CD4-positive, alpha-beta memory T cell (primary cell): ENCODE measurements at regions of chr9 and their contacts with region 1.

Region 1: DNA sequence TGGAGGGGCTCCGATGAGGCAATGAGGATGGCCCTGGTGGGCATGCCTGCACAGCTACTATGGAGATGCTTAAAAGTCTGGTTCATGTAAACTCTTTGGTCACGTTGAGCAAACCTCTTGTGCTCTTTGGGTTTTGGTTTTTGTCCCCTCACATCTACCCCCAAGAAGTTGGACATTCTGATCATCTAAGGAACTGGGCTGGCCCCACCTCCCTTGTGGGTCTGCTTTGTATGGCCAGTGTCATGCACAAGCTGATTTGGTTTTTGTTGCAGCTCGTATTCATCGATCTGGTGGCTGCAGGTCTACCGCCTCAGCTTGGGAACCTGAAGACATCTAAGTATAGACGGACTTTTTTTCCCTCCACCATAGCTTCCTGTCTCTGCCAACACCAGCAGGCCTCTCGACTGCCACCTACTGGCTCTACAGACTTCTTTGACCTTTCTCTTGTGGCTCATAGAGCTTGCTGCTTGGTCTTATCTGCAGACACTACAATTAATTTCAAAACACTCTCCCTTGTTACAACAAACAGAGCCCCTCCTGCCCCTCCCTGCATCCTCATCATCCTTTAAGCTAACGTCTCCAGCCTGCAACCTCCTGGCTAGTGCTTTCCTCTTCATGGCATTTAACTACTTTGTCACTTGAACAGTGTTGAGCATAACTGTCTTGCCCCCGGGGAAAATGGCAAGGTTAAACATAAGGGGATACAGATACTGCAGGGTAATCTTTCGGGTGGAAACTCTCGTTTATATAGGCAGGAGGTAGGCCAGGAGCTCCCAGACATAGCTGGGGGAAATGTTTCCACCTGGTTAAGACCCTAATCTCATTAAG is 34.5 kb downstream of the TSTD2 start:
- DNase-seq: peak; percentile 65 to 71 (median 68)
- H3K4me3 ChIP-seq: no peak overlapping the region
- H3K4me3 Mint-ChIP-seq: peak overlapping the region in 5 of 8 donors; percentile 49 to 73 (median 54)
- H3K27ac ChIP-seq: no peak overlapping the region
- H3K27ac Mint-ChIP-seq: peak overlapping the region in 2 of 7 donors; percentile 33 to 79
- H3K4me1 ChIP-seq: no peaks in the 10 kb centered on the region
- H3K4me1 Mint-ChIP-seq: peaks cover 7 to 9% (median 7%) of the 10 kb centered on the region in 4 donors
- H3K27me3 ChIP-seq: no peaks in the 10 kb centered on the region
- H3K27me3 Mint-ChIP-seq: no peaks in the 10 kb centered on the region

Region 2: DNA sequence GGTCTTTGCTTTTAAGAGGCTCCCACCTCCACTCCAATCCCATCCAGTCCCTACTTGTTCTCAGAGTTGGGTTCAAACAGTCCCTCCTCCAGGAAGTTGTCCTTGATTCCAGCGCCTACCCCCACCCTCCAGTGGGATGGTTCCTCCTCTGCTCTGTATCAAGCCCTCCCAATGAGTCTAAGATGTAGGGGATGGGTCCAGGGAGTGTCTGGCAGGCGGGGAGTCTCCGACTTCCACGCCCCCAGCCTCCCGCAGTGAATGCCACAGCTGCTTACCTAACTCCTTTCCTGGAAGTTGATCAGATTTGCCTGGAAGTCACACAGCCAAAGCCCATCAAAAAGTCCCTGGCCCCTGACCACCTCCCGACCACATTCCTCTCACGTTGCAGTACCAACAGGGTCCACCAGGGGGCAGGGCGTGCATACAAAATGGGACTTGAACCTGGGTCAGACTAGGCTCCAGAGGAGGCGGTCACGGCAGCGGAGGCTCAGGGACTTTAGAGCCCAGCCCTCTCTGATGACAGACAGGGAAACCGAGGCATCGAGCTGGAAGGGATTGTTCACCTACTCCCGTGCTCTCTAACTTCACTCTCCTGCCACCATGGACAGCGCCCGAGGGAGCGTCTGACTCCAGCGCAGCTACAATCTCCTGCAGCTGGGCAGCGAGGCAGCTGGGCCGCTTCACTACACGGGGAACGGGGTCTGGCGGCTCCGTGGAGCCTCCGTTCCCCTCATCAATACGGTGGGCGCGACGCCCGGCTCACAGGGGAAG is 211.8 kb before region 1 on chr9:
- CTCF ChIA-PET with region 1: interaction called, 12 read pairs
- POLR2A ChIA-PET with region 1: no interaction called
- intact Hi-C with region 1: no loop called
- DNase-seq: peak; percentile 43 to 66 (median 57)
- H3K4me3 ChIP-seq: no peak overlapping the region
- H3K4me3 Mint-ChIP-seq: peak overlapping the region in 2 of 8 donors; percentile 22 to 46
- H3K27ac ChIP-seq: no peak overlapping the region
- H3K27ac Mint-ChIP-seq: peak overlapping the region in 1 of 7 donors; percentile 72
- H3K4me1 ChIP-seq: peaks cover 7% of the 10 kb centered on the region
- H3K4me1 Mint-ChIP-seq: peaks cover 2 to 14% (median 9%) of the 10 kb centered on the region in 4 donors
- H3K27me3 ChIP-seq: no peaks in the 10 kb centered on the region
- H3K27me3 Mint-ChIP-seq: peaks cover 2 to 7% of the 10 kb centered on the region in 2 donors

Region 3: DNA sequence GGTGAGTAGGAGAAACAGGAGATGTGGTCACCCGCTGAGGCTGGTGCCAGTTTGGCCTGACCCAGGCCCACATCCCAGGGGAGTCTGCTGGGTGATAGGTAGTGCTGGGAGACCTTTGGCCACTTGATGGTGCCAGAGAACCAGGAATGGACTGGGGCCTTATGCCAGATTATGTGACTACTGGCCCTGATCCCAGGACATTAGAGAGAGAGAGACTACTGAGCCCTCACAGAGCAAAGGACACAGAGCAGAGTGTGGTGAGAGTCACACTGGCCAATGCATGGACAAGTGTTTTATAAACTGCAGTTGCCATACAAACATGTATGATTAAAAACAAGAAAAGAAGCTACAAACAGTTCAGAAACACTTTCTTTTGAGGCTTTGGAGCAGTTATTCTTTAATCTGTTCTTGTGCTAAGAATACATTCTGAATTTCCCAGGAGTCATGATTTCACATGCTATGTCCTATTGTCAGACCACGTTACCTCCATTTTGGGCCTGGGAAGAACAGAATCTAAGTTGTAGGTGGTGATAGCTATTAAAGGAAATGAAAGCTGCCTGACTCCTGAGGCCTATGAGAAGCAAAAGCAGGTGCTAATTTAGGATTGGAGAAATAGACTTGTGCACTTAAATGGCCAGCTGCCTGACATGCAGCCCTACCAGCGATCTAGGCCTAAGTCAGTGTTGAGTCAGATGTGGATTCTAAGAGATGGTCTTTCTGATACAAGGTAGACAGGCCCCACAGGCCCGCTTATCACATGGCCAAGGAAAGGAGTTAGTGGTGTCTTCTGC is 129.8 kb before region 1 on chr9:
- CTCF ChIA-PET with region 1: interaction called, 68 read pairs
- POLR2A ChIA-PET with region 1: no interaction called
- intact Hi-C with region 1: loop called (anchors 1 kb)
- DNase-seq: peak in 3 of 5 donors; percentile 13 to 16 (median 15)
- H3K4me3 ChIP-seq: no peak overlapping the region
- H3K4me3 Mint-ChIP-seq: no peak overlapping the region
- H3K27ac ChIP-seq: no peak overlapping the region
- H3K27ac Mint-ChIP-seq: peak overlapping the region in 2 of 7 donors; percentile 7 to 44
- H3K4me1 ChIP-seq: peaks cover 5% of the 10 kb centered on the region
- H3K4me1 Mint-ChIP-seq: no peaks in the 10 kb centered on the region
- H3K27me3 ChIP-seq: no peaks in the 10 kb centered on the region
- H3K27me3 Mint-ChIP-seq: no peaks in the 10 kb centered on the region

Region 4: DNA sequence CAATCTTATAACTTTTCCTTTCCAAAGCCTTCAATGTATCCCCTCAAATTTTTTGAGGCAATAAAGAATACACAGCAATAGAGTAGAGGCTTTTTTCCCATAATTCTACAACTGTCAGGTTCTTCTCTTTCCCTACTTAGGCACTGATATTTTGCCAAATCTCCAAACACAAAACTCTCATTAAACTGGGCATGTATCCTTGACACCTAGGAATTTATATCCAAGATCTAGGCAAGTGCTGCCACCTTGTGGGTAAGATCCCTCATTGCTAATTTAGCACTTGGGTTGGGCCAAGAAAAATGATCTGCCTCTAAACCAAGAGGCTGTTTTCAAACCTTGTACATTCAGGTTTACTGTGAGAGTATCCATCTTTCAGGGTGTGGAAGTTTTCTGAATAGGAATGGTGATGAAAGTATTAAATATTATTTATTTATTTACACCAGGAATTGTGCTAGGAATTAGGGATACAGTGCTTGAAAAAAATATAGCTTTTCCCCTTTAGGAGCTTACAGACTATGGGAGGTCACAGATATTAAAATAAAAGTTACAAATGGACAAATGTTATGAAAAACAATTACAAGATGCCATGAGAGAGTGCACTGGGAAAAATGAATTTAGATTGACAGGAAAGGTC is 16.9 kb after region 1 on chr9:
- CTCF ChIA-PET with region 1: interaction called, 105 read pairs
- POLR2A ChIA-PET with region 1: no interaction called
- intact Hi-C with region 1: no loop called
- DNase-seq: peak; percentile 49 to 63 (median 57)
- H3K4me3 ChIP-seq: no peak overlapping the region
- H3K4me3 Mint-ChIP-seq: no peak overlapping the region
- H3K27ac ChIP-seq: no peak overlapping the region
- H3K27ac Mint-ChIP-seq: peak overlapping the region in 2 of 7 donors; percentile 1 to 10
- H3K4me1 ChIP-seq: no peaks in the 10 kb centered on the region
- H3K4me1 Mint-ChIP-seq: peaks cover 0 to 1% (median 0%) of the 10 kb centered on the region in 4 donors
- H3K27me3 ChIP-seq: no peaks in the 10 kb centered on the region
- H3K27me3 Mint-ChIP-seq: no peaks in the 10 kb centered on the region

Region 5: GRCh38 chr9:97632985-97633858 is 34.5 kb after region 1 on chr9 and contains the starts of genes NCBP1 and TSTD2:
- CTCF ChIA-PET with region 1: interaction called, 18 read pairs
- POLR2A ChIA-PET with region 1: interaction called, 4 read pairs
- intact Hi-C with region 1: no loop called
- DNase-seq: peak; percentile 96 to 97 (median 97)
- H3K4me3 ChIP-seq: peak within 1 kb of the TSS; percentile 80 to 87
- H3K4me3 Mint-ChIP-seq: peak within 1 kb of the TSS; percentile 96 to 100 (median 98)
- H3K27ac ChIP-seq: peak within 1 kb of the TSS; percentile 92
- H3K27ac Mint-ChIP-seq: peak within 1 kb of the TSS; percentile 96 to 100 (median 100)
- H3K4me1 ChIP-seq: peaks cover 52% of the 10 kb centered on the region
- H3K4me1 Mint-ChIP-seq: peaks cover 37 to 65% (median 51%) of the 10 kb centered on the region in 4 donors
- H3K27me3 ChIP-seq: no peaks in the 10 kb centered on the region
- H3K27me3 Mint-ChIP-seq: no peaks in the 10 kb centered on the region
- total RNA-seq, gene NCBP1: 40.7 to 50.8 TPM
- total RNA-seq, gene TSTD2: 17.8 to 18.4 TPM

Region 6: DNA sequence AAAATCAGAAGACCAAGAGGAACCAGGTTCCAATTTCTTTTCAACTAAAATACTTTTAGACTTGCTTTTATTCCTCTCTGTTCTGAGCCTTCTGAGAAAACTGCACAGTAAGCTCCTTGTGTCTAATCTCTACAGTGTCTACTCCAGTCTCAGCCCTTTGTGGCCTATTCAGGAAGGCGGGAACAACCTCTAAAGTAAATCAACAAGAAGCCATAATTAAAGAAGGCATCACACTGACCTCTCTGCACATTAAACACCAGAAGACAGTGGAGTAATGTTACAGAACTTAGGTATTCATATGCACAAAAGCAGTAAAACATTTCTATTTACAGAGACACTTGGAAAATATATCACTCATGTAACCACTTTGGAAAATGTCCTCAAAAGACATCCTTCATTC is 83.6 kb after region 1 on chr9:
- CTCF ChIA-PET with region 1: no interaction called
- POLR2A ChIA-PET with region 1: no interaction called
- intact Hi-C with region 1: no loop called
- DNase-seq: no peak
- H3K4me3 ChIP-seq: no peak overlapping the region
- H3K4me3 Mint-ChIP-seq: no peak overlapping the region
- H3K27ac ChIP-seq: no peak overlapping the region
- H3K27ac Mint-ChIP-seq: peak overlapping the region in 5 of 7 donors; percentile 36 to 86 (median 62)
- H3K4me1 ChIP-seq: no peaks in the 10 kb centered on the region
- H3K4me1 Mint-ChIP-seq: peaks cover 1 to 16% (median 8%) of the 10 kb centered on the region in 4 donors
- H3K27me3 ChIP-seq: no peaks in the 10 kb centered on the region
- H3K27me3 Mint-ChIP-seq: no peaks in the 10 kb centered on the region